ENCODE measurements at regions of chr11 and their contacts with region 1.

Region 1: DNA sequence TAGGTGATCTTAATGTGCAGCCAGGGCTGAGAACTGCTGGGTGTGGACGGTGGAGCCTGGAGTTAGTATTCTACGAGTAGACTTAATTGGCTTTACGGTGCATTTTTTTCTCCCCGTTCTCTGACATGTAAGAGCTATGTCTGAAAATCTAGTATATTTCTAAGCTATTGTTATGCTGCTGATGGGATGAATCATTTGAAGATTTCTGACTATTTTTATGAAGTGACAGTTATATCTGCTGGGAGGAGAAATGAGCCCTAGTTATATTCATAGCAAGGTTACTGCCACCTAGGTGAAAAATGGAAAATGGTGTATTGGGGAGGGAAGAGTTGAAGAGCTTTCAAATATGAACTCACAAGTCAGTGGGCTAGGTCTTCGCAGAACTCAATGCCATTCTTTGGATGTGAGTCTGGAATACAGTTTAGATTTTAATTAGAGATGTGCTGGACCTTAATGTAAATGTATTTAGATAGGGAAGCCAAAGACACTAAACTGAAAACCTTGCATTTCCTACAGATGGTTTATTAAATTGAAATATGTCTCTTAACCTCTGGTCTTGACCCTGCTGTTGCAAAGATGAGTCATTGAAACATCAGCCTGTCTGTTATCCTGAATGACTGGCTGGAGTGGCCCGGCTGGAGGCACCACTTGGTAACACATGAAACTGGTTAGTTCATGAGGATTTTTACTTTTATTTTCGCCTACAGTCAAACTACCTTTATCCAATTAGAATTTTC is 293.7 kb downstream of the DDX10 start:
- DNase-seq: no peak
- ATAC-seq: no peak
- H3K4me3 ChIP-seq: no peak overlapping the region
- H3K4me3 Mint-ChIP-seq: no peak overlapping the region
- H3K27ac ChIP-seq: no peak overlapping the region
- H3K27ac Mint-ChIP-seq: no peak overlapping the region
- H3K4me1 ChIP-seq: no peaks in the 10 kb centered on the region
- H3K4me1 Mint-ChIP-seq: peaks cover 0 to 3% (median 0%) of the 10 kb centered on the region in 3 donors
- H3K27me3 ChIP-seq: no peaks in the 10 kb centered on the region
- H3K27me3 Mint-ChIP-seq: peaks cover 0 to 4% of the 10 kb centered on the region in 2 donors

Region 2: GRCh38 chr11:107970049-107970448 is 988.5 kb before region 1 on chr11:
- CTCF ChIA-PET with region 1: no interaction called
- POLR2A ChIA-PET with region 1: interaction called in 1 of 2 experiments, 11 read pairs
- DNase-seq: no peak
- ATAC-seq: no peak
- H3K4me3 ChIP-seq: no peak overlapping the region
- H3K4me3 Mint-ChIP-seq: no peak overlapping the region
- H3K27ac ChIP-seq: no peak overlapping the region
- H3K27ac Mint-ChIP-seq: no peak overlapping the region
- H3K4me1 ChIP-seq: no peaks in the 10 kb centered on the region
- H3K4me1 Mint-ChIP-seq: no peaks in the 10 kb centered on the region
- H3K27me3 ChIP-seq: peaks cover 0 to 7% of the 10 kb centered on the region in 2 experiments
- H3K27me3 Mint-ChIP-seq: peaks cover 0 to 4% of the 10 kb centered on the region in 2 donors

Region 3: GRCh38 chr11:108895579-108896480 is 62.7 kb before region 1 on chr11:
- CTCF ChIA-PET with region 1: no interaction called
- POLR2A ChIA-PET with region 1: no interaction called
- DNase-seq: no peak
- ATAC-seq: no peak
- H3K4me3 ChIP-seq: no peak overlapping the region
- H3K4me3 Mint-ChIP-seq: peak overlapping the region in 1 of 3 donors; percentile 13
- H3K27ac ChIP-seq: no peak overlapping the region
- H3K27ac Mint-ChIP-seq: no peak overlapping the region
- H3K4me1 ChIP-seq: no peaks in the 10 kb centered on the region
- H3K4me1 Mint-ChIP-seq: peaks cover 4 to 9% (median 4%) of the 10 kb centered on the region in 3 donors
- H3K27me3 ChIP-seq: no peaks in the 10 kb centered on the region
- H3K27me3 Mint-ChIP-seq: no peaks in the 10 kb centered on the region

Measured in T-cell (primary cell).